ENCODE measurements at regions of chr14 and their contacts with region 1.

Region 1: DNA sequence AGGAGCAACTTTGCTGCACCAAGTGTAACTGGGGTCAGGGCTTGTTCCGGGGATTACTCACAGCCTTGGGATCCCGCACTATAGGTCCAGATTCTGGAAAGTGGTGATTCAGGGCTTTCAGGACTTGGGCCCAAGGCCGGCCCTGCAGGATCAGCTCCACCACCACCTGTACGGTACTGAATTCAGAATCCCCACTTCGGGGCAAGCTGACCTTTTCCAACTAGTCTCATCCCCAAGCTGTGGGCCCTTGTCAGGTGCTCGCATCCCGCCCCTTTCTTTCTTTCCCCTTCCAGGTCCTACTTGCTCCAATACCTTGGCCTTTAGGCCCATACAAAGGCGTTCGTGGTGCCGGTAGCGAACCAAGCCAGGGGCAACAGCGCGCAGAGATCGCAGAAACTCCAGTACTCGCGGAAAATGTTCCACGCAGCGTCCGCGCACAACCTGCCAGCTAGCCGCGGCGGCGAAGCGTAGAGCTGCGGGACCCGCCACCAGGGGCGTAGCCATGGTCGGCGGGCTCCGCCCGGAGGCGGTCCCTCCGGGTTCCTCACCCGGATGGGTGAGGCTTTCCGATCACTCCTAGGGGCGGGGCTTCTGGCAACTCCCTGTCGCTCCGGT is 487 bp downstream of the TINF2 start:
- DNase-seq: no peak
- H3K4me3 ChIP-seq: peak overlapping the region; percentile 64
- H3K27me3 ChIP-seq: no peaks in the 10 kb centered on the region
- CTCF ChIP-seq: peak; percentile 70

Region 2: DNA sequence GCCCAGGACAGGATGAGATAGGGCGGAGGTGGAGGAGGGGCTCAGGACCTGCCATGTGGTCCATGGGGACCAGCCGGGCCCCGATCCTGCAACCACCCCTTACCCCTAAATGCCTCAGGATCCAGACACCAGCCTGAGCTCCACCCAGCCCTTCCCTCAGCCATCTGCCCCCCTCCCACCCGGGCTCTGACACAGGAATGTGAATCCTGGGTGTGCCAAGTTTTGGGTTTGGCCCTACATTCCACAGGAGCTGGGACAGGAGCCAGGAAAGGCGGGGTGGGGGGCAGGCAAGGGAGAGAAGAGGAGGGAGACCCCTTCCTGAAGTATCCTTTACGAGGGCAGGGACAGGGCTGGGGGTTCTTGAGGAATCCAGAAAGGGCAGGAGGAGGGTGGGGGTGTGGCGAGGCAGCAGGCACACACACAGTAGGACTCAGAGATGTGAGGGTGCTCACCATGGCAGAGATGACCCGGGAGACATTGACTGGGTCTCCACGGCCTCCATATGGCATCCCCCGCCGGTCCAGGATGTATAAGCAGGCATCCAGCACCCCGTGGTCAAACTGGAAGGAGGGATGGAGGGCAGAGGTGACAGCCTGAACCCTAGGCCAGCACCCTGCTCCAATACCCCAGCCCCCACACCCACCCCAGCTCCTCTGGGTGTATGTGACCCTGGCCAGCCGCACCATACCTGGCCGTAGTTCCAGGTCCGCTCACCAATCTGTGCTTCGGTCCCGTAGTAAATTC is 17.5 kb after region 1 on chr14:
- CTCF ChIA-PET with region 1: interaction called, 12 read pairs
- POLR2A ChIA-PET with region 1: no interaction called
- DNase-seq: no peak
- H3K4me3 ChIP-seq: no peak overlapping the region
- H3K27me3 ChIP-seq: no peaks in the 10 kb centered on the region
- CTCF ChIP-seq: no peak

Region 3: DNA sequence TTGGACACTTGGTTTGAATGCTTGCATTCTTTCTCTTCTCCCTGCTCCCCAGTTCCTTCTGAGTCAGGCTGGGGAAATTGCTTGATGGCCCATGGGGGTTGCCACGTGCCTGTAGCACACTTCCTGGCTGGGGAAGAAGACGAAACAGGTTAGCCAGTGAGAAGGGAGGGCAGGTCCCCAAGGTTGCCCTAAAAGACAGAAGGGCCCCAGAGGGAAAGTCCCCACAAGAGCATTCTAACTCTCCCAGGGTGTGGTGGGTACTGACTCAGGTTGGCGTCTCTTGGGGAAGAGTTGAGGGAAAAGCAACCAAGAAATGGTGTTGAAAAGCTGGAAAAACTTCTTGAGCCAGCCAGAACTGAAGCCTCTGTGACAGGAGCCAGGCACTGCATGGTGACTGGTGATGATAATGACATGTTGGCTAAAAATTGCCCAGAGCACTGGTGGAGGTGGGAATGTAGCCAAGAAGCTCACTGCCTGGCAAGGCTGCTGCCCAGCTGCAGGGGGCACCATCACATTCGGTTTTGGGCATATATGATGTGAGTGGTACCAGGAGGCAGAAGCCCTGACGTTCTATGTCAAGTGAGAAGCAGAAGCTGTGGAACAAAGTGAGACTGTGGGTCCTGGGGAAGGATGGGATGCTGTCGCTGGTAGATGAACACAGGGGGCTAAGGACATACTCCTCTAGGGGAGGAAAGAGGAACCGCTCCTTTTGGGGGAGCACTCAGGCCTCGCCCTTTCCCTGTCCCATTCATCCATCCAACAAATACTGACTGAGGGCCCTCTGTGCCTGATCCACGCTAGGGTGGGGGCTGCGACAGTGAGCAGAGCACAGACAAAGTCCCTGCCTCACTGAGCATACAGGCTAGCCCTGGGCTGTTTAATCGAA is 37.6 kb after region 1 on chr14:
- CTCF ChIA-PET with region 1: interaction called, 19 read pairs
- POLR2A ChIA-PET with region 1: no interaction called
- DNase-seq: no peak
- H3K4me3 ChIP-seq: no peak overlapping the region
- H3K27me3 ChIP-seq: no peaks in the 10 kb centered on the region
- CTCF ChIP-seq: no peak

Region 4: DNA sequence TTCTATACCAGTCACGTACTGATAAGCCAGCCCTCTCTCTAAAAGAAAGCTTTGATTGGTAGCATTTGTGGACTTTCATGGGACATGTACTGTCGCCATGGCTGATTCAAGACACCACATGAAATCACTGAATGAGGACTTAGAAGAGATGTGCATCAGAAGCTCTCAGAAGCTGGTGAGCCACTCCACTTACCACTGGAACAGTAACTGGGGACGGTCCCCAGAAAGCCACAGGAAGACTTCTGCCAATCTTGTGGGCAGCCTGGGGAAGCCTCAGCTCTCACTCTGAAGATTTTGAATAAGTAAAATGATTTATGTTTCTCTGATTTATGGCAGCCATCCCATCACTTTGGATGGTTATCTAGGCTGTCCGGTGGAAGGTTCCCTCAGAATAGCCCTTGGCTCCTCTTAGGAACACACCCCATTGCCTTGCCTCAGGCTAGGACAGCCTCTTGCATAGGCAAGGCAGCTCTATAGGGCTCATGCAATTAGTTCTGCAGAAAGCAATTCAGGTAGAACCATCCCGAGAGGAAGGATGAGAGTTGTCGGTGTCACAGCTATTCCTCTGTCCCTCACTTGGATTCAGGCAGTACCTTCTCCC is 47.8 kb after region 1 on chr14:
- CTCF ChIA-PET with region 1: interaction called, 205 read pairs
- POLR2A ChIA-PET with region 1: interaction called, 3 read pairs
- DNase-seq: no peak
- H3K4me3 ChIP-seq: no peak overlapping the region
- H3K27me3 ChIP-seq: no peaks in the 10 kb centered on the region
- CTCF ChIP-seq: no peak

Region 5: DNA sequence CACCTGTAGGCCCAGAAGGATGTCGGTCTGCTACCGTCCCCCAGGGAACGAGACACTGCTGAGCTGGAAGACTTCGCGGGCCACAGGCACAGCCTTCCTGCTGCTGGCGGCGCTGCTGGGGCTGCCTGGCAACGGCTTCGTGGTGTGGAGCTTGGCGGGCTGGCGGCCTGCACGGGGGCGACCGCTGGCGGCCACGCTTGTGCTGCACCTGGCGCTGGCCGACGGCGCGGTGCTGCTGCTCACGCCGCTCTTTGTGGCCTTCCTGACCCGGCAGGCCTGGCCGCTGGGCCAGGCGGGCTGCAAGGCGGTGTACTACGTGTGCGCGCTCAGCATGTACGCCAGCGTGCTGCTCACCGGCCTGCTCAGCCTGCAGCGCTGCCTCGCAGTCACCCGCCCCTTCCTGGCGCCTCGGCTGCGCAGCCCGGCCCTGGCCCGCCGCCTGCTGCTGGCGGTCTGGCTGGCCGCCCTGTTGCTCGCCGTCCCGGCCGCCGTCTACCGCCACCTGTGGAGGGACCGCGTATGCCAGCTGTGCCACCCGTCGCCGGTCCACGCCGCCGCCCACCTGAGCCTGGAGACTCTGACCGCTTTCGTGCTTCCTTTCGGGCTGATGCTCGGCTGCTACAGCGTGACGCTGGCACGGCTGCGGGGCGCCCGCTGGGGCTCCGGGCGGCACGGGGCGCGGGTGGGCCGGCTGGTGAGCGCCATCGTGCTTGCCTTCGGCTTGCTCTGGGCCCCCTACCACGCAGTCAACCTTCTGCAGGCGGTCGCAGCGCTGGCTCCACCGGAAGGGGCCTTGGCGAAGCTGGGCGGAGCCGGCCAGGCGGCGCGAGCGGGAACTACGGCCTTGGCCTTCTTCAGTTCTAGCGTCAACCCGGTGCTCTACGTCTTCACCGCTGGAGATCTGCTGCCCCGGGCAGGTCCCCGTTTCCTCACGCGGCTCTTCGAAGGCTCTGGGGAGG is 69.0 kb after region 1 on chr14 and contains the start of gene LTB4R:
- CTCF ChIA-PET with region 1: interaction called, 65 read pairs
- POLR2A ChIA-PET with region 1: interaction called, 3 read pairs
- DNase-seq: no peak
- H3K4me3 ChIP-seq: peak within 1 kb of the TSS; percentile 25
- H3K27me3 ChIP-seq: no peaks in the 10 kb centered on the region
- CTCF ChIP-seq: peak; percentile 33
- polyA plus RNA-seq, gene LTB4R: 2.5 and 2.6 TPM in 2 replicates

Region 6: GRCh38 chr14:24339284-24340151 is 97.6 kb after region 1 on chr14 and contains the start of gene RIPK3:
- CTCF ChIA-PET with region 1: no interaction called
- POLR2A ChIA-PET with region 1: no interaction called
- DNase-seq: no peak
- H3K4me3 ChIP-seq: peak within 1 kb of the TSS; percentile 41
- H3K27me3 ChIP-seq: peaks cover 5% of the 10 kb centered on the region
- CTCF ChIP-seq: no peak
- polyA plus RNA-seq, gene RIPK3: 4.3 and 4.4 TPM in 2 replicates

Region 7: DNA sequence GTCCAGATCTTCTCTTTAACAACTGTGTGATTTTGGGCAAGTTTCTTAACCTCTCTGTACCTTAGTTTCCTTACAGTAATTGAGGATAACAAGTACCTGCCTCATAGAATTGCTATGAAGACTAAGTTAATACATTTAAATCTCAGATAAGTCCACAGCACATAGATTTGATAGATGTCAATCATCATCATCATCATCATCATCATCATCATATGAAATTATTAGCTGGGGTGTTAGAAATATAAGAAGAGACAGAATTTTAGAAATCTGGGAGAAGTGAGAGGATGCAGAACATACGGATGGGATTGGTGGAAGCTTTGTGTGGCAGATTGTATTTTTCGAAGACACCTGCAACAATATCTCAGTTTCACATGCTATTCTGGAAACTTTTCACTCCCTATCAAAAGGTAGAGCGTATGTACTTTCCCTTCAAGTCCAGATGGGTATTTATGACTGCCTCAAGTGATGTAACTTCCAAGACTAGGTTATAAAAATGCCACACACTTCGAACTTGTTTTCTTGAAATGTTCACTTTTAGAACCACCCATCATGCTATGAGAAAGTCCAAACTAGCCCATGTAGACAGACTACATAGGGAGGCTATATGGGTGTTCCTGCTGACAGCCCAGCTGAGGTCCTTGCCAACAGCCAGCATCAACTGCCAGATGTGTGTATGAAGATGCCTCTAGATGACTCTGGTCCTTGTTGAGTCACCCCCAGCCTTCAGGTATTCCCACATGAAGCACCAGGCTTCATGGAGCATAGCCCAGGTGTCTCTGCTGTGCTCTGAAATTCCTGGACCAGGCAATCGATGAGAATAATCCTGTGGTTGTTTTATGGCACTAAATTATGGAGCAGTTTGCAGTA is 221.3 kb after region 1 on chr14:
- CTCF ChIA-PET with region 1: no interaction called
- POLR2A ChIA-PET with region 1: no interaction called
- DNase-seq: no peak
- H3K4me3 ChIP-seq: no peak overlapping the region
- H3K27me3 ChIP-seq: no peaks in the 10 kb centered on the region
- CTCF ChIP-seq: no peak